ENCODE measurements at regions of chrX and their contacts with region 1.

Region 1: GRCh38 chrX:23844502-23845138 is 61.6 kb downstream of the SAT1 start:
- DNase-seq: no peak
- H3K4me3 ChIP-seq: no peak overlapping the region
- H3K27ac ChIP-seq: no peak overlapping the region
- H3K4me1 ChIP-seq: no peaks in the 10 kb centered on the region
- H3K27me3 ChIP-seq: no peaks in the 10 kb centered on the region
- CTCF ChIP-seq: no peak

Region 2: GRCh38 chrX:23884427-23885024 is 39.9 kb after region 1 on chrX:
- intact Hi-C with region 1: loop called (anchors 5 kb)
- DNase-seq: peak in 1 of 2 donors; percentile 11
- H3K4me3 ChIP-seq: no peak overlapping the region
- H3K27ac ChIP-seq: no peak overlapping the region
- H3K4me1 ChIP-seq: no peaks in the 10 kb centered on the region
- H3K27me3 ChIP-seq: no peaks in the 10 kb centered on the region
- CTCF ChIP-seq: no peak

Region 3: GRCh38 chrX:24395775-24396174 is 551.2 kb after region 1 on chrX:
- intact Hi-C with region 1: no loop called
- DNase-seq: peak in 1 of 2 donors; percentile 82
- H3K4me3 ChIP-seq: peak overlapping the region in 1 of 2 donors; percentile 0
- H3K27ac ChIP-seq: peak overlapping the region; percentile 79
- H3K4me1 ChIP-seq: peaks cover 0 to 14% of the 10 kb centered on the region in 2 donors
- H3K27me3 ChIP-seq: no peaks in the 10 kb centered on the region
- CTCF ChIP-seq: peak; percentile 78 to 86 (median 82)

Measured in ascending aorta (tissue), 2 donors.